ENCODE measurements at regions of chr6 and their contacts with region 1.

Region 1: DNA sequence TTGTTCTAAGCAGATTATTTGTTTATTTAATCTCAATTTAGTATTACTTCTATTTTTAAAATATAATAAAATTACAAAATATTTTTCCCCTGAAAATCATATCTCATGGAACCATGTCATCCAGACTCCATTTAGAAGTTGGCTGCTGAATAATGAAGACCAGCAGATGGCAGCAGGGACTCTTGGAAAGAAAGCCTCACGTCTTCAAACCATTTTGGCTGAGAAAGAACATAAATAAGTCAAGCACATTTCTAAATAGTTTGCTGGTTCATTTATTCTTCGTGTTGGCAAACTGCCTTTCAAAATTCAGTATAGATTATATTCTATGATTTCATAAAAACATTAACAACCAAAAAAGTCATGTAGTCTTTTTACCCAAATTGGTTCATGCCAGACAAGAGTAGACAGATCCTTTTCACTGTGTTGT is 71.7 kb downstream of the RCAN2 start:
- DNase-seq: peak; percentile 70
- H3K4me3 ChIP-seq: no peak overlapping the region
- H3K27ac ChIP-seq: no peak overlapping the region
- H3K4me1 ChIP-seq: no peaks in the 10 kb centered on the region
- H3K27me3 ChIP-seq: peaks cover 10% of the 10 kb centered on the region
- CTCF ChIP-seq: peak; percentile 80

Region 2: GRCh38 chr6:46325561-46326530 is 93.7 kb before region 1 on chr6:
- CTCF ChIA-PET with region 1: no interaction called
- POLR2A ChIA-PET with region 1: no interaction called
- intact Hi-C with region 1: no loop called
- DNase-seq: peak; percentile 56
- H3K4me3 ChIP-seq: no peak overlapping the region
- H3K27ac ChIP-seq: no peak overlapping the region
- H3K4me1 ChIP-seq: no peaks in the 10 kb centered on the region
- H3K27me3 ChIP-seq: peaks cover 13% of the 10 kb centered on the region
- CTCF ChIP-seq: no peak

Region 3: GRCh38 chr6:46626228-46626909 is 206.8 kb after region 1 on chr6:
- CTCF ChIA-PET with region 1: no interaction called
- POLR2A ChIA-PET with region 1: no interaction called
- intact Hi-C with region 1: loop called (anchors 1 kb)
- DNase-seq: peak; percentile 39
- H3K4me3 ChIP-seq: no peak overlapping the region
- H3K27ac ChIP-seq: no peak overlapping the region
- H3K4me1 ChIP-seq: no peaks in the 10 kb centered on the region
- H3K27me3 ChIP-seq: peaks cover 1% of the 10 kb centered on the region
- CTCF ChIP-seq: peak; percentile 64

Region 4: DNA sequence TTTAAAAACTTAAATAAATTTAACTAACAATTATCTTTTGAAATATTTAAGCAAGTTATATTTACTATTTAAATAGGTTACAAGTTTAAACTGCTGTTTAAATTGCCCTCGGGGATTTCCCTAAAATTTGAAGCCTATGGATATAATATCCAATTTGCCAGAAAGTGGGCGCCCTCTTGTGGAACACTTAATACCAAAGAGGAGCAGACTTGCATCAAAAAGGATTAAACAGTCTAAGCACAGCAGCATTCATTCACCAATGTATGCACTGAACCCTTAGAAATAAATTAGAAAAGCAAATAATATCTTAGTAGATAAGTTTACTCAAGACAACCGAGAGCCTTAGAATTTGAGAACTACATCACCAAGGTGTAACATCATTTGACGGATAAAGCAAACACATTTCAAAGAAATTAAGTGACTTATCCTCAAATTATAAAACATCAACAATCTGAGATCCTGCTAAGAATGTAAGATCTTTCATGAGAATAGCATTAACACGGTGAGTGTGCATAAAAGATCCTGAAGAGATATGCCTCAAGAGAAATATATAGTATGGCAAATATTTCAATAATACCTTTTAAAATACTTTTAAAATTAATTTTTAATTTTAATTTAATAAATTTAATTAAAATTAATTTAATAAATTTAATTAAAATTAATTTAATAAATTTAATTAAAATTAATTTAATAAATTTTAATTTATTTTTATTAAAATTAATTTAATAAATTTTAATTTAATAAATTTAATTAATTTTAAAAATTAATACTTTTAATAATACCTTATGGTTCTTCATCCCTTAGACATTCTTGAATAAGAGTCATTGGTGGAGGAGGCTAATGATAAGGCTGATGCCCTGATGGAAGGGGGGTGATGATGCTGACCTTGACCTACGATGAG is 362.1 kb after region 1 on chr6:
- CTCF ChIA-PET with region 1: no interaction called
- POLR2A ChIA-PET with region 1: no interaction called
- intact Hi-C with region 1: loop called (anchors 5 kb)
- DNase-seq: peak; percentile 77
- H3K4me3 ChIP-seq: no peak overlapping the region
- H3K27ac ChIP-seq: no peak overlapping the region
- H3K4me1 ChIP-seq: no peaks in the 10 kb centered on the region
- H3K27me3 ChIP-seq: no peaks in the 10 kb centered on the region
- CTCF ChIP-seq: peak; percentile 80

Region 5: GRCh38 chr6:46993846-46994245 is 574.3 kb after region 1 on chr6:
- CTCF ChIA-PET with region 1: no interaction called
- POLR2A ChIA-PET with region 1: no interaction called
- intact Hi-C with region 1: loop called (anchors 5 kb)
- DNase-seq: no peak
- H3K4me3 ChIP-seq: no peak overlapping the region
- H3K27ac ChIP-seq: no peak overlapping the region
- H3K4me1 ChIP-seq: no peaks in the 10 kb centered on the region
- H3K27me3 ChIP-seq: peaks cover 30% of the 10 kb centered on the region
- CTCF ChIP-seq: no peak

Region 6: DNA sequence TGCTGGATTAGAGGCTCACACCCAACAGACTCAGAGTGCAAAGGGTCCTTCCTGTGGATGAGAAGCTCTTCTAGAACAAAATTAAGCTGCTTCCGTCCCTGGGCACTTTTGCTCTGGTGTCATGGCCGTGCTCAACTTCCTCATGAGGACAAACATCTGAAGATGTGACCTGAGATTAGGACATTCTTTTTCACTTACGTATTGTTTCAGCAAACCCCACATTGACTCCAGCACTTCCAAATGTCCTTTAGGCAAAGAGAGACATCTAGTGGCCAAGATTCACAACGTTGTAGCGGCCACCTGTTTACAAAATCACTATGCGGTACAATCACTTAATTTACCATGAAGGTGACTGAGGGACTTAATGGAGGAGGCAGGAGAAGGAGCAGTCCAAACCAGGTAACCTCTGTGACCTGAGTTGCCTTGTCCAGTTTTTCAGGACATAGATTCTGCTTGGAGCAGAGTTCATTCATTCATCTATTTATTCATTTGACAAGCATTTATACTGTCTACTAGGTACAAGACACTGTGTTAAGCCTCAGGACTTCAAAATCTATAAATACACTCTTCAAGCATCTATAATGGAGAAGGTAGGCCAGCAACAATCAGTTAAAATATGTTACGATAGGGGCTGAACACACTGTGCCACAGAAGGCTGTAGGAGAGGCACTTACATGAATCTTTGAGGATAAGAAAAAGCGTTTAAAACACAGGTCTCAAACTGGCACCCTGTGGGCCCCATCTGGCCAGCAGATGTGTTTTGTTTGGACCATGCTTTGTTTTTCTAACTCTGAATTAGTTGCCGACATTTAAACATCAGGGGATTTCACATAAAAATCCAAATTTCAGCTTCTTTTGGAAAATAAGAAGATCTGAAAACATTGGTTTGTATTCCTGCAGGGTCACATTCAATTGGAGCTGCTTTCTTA is 628.2 kb after region 1 on chr6:
- CTCF ChIA-PET with region 1: no interaction called
- POLR2A ChIA-PET with region 1: no interaction called
- intact Hi-C with region 1: loop called (anchors 10 kb)
- DNase-seq: peak; percentile 79
- H3K4me3 ChIP-seq: no peak overlapping the region
- H3K27ac ChIP-seq: no peak overlapping the region
- H3K4me1 ChIP-seq: no peaks in the 10 kb centered on the region
- H3K27me3 ChIP-seq: peaks cover 27% of the 10 kb centered on the region
- CTCF ChIP-seq: peak; percentile 85